ENCODE measurements at regions of chr6 and their contacts with region 1.

Region 1: DNA sequence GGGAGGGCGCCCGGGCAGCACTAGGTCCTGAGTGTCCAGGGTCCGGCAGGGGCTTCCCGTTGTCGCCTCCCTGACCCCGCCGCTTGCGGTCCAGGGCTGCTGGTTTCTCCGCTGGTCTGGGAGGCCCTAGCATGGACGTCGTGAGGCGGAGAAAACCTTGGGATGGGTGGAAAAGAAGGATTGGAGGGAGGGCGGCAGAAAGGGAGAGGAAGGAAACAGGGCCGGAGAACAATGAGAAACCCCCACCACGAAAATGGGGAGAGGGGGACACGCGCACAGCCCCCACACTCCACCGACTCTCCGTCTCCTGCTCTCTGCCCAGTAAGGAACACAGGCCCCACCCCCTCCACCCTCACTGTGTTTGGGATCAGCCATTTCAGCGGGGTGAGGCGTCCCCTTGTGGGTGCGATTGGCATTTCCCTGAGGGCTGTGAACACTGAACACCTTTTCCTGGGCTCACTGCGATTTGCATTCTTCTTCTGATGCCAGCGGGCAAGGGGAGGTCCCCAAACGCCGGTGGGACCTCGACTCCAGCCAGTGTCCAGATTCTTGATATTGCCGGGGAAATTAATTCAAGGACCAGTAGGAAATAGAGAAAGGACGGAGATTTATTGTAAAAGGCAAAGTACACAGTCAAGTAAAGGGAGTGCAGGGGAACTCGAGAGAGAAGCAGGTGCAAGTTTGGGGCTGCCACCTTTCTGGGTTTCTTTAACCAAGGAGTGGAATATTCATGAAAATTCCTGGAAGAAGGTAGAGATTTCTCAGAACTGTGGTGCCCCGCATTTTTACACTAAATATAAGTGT is 3.3 kb upstream of the RAET1G start:
- DNase-seq: peak; percentile 93
- H3K4me3 Mint-ChIP-seq: peak overlapping the region; percentile 44
- H3K27ac Mint-ChIP-seq: no peak overlapping the region
- H3K4me1 Mint-ChIP-seq: peaks cover 15% of the 10 kb centered on the region
- H3K27me3 Mint-ChIP-seq: peaks cover 78% of the 10 kb centered on the region

Region 2: GRCh38 chr6:149565527-149566409 is 360.4 kb before region 1 on chr6 and contains the start of gene GINM1:
- CTCF ChIA-PET with region 1: no interaction called
- intact Hi-C with region 1: loop called (anchors 2 kb)
- DNase-seq: peak; percentile 97
- H3K4me3 Mint-ChIP-seq: peak within 1 kb of the TSS; percentile 92
- H3K27ac Mint-ChIP-seq: peak within 1 kb of the TSS; percentile 89
- H3K4me1 Mint-ChIP-seq: peaks cover 26% of the 10 kb centered on the region
- H3K27me3 Mint-ChIP-seq: no peaks in the 10 kb centered on the region
- total RNA-seq, gene GINM1: 17.6 to 18.4 TPM

Region 3: DNA sequence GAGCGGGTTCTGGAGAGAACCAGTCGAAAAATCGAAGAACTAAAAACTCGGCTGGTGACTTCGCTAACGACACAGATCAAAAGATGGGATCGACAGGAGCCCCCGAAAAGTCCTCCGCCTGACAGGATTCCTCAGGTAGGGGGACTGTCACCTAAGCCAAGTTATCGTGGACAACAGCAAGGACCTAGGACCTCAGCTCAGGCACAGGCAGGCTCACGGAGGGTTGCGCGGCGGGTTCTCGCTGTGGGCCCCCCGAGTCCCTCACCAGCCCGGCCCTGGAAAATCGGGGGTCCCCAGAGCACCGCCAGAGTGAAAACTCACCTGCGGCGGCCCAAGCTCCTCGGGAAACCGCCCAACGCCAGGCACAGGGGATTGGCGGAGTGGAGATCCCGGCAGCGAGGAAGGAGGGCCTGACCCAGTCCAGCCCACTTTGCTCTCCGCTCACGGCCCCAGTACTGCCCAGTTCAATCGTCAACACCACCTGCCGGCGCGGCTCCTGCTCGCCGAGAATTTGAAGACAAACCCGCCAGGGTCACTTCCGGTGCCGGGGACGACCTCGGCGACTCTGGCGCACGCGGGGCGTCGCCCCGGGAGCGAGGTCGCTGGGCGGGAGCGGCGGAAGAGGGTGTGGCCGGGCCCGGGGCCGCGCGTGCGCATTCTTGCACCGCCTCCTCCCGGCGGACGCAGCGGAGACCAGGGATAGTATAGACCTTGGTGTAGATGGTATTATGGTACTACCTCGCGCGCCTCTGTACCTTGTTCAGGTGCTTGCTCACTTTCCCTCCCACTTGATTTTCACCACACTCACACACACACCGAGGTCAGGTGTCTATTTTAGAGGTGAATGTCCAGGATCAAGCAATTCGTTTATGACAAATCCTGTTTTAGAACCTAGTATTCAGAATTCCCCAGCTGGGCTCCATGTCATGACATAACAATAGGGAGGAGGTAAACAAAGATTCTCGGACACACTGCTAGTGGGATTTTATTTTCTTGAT is 277.7 kb before region 1 on chr6 and contains the start of gene KATNA1:
- CTCF ChIA-PET with region 1: no interaction called
- intact Hi-C with region 1: loop called (anchors 10 kb)
- DNase-seq: peak; percentile 90
- H3K4me3 Mint-ChIP-seq: peak within 1 kb of the TSS; percentile 79
- H3K27ac Mint-ChIP-seq: peak within 1 kb of the TSS; percentile 65
- H3K4me1 Mint-ChIP-seq: peaks cover 22% of the 10 kb centered on the region
- H3K27me3 Mint-ChIP-seq: no peaks in the 10 kb centered on the region
- total RNA-seq, gene KATNA1: 18.2 to 19.7 TPM

Region 4: GRCh38 chr6:149717588-149718458 is 208.4 kb before region 1 on chr6 and contains the start of gene LATS1:
- CTCF ChIA-PET with region 1: no interaction called
- intact Hi-C with region 1: loop called (anchors 2 kb)
- DNase-seq: peak; percentile 95
- H3K4me3 Mint-ChIP-seq: peak within 1 kb of the TSS; percentile 84
- H3K27ac Mint-ChIP-seq: peak within 1 kb of the TSS; percentile 94
- H3K4me1 Mint-ChIP-seq: peaks cover 25% of the 10 kb centered on the region
- H3K27me3 Mint-ChIP-seq: no peaks in the 10 kb centered on the region
- total RNA-seq, gene LATS1: 18.1 to 19.6 TPM

Region 5: GRCh38 chr6:149723771-149724417 is 202.3 kb before region 1 on chr6:
- CTCF ChIA-PET with region 1: no interaction called
- intact Hi-C with region 1: loop called (anchors 1 kb)
- DNase-seq: peak; percentile 56
- H3K4me3 Mint-ChIP-seq: no peak overlapping the region
- H3K27ac Mint-ChIP-seq: no peak overlapping the region
- H3K4me1 Mint-ChIP-seq: peaks cover 12% of the 10 kb centered on the region
- H3K27me3 Mint-ChIP-seq: no peaks in the 10 kb centered on the region

Region 6: GRCh38 chr6:149834513-149835481 is 91.4 kb before region 1 on chr6:
- CTCF ChIA-PET with region 1: interaction called, 19 read pairs
- intact Hi-C with region 1: loop called (anchors 1 kb)
- DNase-seq: peak; percentile 87
- H3K4me3 Mint-ChIP-seq: no peak overlapping the region
- H3K27ac Mint-ChIP-seq: no peak overlapping the region
- H3K4me1 Mint-ChIP-seq: peaks cover 2% of the 10 kb centered on the region
- H3K27me3 Mint-ChIP-seq: no peaks in the 10 kb centered on the region

Region 7: DNA sequence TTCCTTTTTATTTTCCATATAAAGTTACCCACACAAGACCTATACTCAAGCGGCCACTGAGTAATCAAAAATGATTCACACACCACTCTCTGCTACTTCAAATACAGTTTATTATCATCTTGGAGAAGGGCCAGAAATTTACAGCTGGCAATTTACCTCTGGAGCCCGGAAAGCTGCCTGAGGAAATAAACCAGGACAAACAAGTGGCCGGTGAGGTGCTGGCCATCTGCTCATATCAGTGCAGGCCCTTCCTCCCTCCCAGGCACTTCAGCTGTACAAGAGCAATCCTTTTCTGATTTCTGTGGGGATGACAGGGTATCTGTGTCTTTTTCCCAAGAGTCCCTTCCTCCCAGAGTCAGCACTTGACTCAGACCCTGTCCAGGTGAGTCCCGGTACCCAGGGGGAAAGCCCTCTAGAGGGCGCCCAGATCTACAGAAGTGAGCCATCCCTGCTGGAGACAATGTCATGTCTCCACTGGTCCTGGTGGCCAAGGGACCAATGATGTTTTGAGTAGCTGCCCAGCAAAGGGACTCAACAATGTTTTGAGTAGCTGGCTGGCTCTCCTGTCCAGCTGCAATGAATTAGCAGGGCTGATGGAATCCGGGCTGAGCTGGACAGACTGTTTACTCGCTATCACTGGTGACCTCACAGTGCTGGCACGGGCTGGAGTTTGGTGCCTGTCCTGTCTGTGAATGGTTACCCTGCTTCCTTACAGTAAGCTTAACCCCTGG is 85.7 kb before region 1 on chr6:
- CTCF ChIA-PET with region 1: interaction called, 19 read pairs
- intact Hi-C with region 1: loop called (anchors 1 kb)
- DNase-seq: peak; percentile 82
- H3K4me3 Mint-ChIP-seq: no peak overlapping the region
- H3K27ac Mint-ChIP-seq: no peak overlapping the region
- H3K4me1 Mint-ChIP-seq: no peaks in the 10 kb centered on the region
- H3K27me3 Mint-ChIP-seq: no peaks in the 10 kb centered on the region

Region 8: DNA sequence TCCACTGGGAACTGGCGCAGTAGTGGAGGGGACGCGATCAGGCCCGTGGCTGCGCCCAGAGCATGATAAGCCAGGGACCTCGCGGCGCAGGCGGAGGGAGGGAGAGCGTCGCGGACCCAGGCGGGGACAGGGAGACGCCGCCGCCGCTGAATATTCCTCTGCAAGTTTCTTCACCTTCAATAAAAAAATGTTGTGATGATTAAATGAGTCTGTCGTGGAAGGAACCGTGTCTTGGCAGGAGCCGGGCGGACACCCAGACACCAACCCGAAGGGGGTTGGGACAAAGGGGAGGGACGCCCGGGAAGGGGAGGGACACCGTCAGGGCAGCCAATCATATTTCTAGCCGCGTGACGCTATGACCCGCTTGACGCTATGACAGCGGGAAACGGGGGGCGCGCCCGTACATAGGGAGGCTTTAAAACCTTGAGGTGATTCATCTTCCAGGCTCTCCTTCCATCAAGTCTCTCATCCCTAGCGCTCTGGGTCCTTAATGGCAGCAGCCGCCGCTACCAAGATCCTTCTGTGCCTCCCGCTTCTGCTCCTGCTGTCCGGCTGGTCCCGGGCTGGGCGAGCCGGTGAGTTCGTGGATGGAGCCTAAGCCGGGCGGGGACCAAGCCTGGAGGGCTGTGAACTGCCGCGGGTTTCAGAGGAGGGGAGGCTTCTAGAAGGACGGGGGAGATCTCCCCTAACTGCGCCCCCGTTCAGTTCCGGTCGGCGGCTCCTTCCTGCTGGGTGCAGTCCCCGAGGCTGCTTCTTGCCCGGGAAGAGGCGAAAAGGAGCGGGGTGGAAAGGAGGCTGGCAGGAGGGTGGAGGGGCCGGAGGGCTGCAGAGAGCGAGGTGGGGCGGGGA is 15.6 kb after region 1 on chr6 and contains the start of gene ULBP2:
- CTCF ChIA-PET with region 1: no interaction called
- intact Hi-C with region 1: no loop called
- DNase-seq: peak; percentile 96
- H3K4me3 Mint-ChIP-seq: peak within 1 kb of the TSS; percentile 89
- H3K27ac Mint-ChIP-seq: no peak within 1 kb of the TSS
- H3K4me1 Mint-ChIP-seq: peaks cover 32% of the 10 kb centered on the region
- H3K27me3 Mint-ChIP-seq: peaks cover 46% of the 10 kb centered on the region
- total RNA-seq, gene ULBP2: 0.69 to 1.4 TPM

Region 9: GRCh38 chr6:149974825-149975224 is 48.6 kb after region 1 on chr6:
- CTCF ChIA-PET with region 1: no interaction called
- intact Hi-C with region 1: no loop called
- DNase-seq: no peak
- H3K4me3 Mint-ChIP-seq: no peak overlapping the region
- H3K27ac Mint-ChIP-seq: no peak overlapping the region
- H3K4me1 Mint-ChIP-seq: peaks cover 4% of the 10 kb centered on the region
- H3K27me3 Mint-ChIP-seq: peaks cover 54% of the 10 kb centered on the region

Measured in activated naive CD4-positive, alpha-beta T cell treated with anti-CD3 and anti-CD28 coated beads for 36 hours (primary cell).